ENCODE measurements at regions of chr7 and their contacts with region 1.

Region 1: GRCh38 chr7:75795831-75796285 is 17.7 kb downstream of the CCL24 start:
- H3K4me3 Mint-ChIP-seq: peak overlapping the region; percentile 43
- H3K27ac Mint-ChIP-seq: peak overlapping the region; percentile 82
- H3K4me1 Mint-ChIP-seq: peaks cover 58% of the 10 kb centered on the region
- H3K27me3 Mint-ChIP-seq: peaks cover 38% of the 10 kb centered on the region

Region 2: DNA sequence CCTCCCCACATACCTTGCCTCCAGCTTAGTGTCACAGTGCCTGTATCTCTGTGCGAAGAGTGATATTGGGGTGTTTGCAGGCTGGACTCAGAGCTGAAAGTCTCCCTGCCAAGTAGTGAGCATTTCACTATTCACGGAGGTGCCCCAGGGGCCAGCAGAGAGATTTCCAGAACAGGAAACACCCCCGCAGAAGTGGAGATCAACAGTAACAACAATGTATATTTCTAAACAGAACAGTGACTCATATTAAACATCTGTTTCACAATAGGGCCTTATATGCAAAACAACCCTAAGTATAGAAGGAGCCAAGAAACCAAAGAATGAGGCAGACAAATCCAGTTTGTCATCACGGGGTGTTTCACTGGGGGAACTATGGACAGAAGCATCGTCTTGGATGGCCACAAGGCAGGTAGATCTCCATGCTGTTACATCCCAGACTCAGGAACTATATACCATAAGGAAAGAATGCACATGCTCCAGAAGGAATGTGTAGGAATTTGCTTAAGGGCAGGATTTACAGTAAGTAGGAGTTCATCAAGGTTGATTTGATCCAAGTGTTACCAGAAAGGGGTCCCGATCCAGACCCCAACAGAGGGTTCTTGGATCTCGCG is 47.1 kb after region 1 on chr7:
- intact Hi-C with region 1: loop called (anchors 10 kb)
- H3K4me3 Mint-ChIP-seq: peak overlapping the region; percentile 71
- H3K27ac Mint-ChIP-seq: peak overlapping the region; percentile 95
- H3K4me1 Mint-ChIP-seq: peaks cover 76% of the 10 kb centered on the region
- H3K27me3 Mint-ChIP-seq: no peaks in the 10 kb centered on the region

Region 3: GRCh38 chr7:75878769-75879611 is 83.1 kb after region 1 on chr7 and contains the start of gene RHBDD2:
- intact Hi-C with region 1: loop called (anchors 5 kb)
- H3K4me3 Mint-ChIP-seq: peak within 1 kb of the TSS; percentile 95
- H3K27ac Mint-ChIP-seq: peak within 1 kb of the TSS; percentile 83
- H3K4me1 Mint-ChIP-seq: peaks cover 78% of the 10 kb centered on the region
- H3K27me3 Mint-ChIP-seq: no peaks in the 10 kb centered on the region

Measured in dendritic cell treated with granulocyte-macrophage colony-stimulating factor and Interleukin-4, amounts not matched to agents 40 ng/mL and 50 ng/mL, for 4 days (primary cell).